Keratinocyte (primary cell): ENCODE measurements at regions of chr9 and their contacts with region 1.

Region 1: DNA sequence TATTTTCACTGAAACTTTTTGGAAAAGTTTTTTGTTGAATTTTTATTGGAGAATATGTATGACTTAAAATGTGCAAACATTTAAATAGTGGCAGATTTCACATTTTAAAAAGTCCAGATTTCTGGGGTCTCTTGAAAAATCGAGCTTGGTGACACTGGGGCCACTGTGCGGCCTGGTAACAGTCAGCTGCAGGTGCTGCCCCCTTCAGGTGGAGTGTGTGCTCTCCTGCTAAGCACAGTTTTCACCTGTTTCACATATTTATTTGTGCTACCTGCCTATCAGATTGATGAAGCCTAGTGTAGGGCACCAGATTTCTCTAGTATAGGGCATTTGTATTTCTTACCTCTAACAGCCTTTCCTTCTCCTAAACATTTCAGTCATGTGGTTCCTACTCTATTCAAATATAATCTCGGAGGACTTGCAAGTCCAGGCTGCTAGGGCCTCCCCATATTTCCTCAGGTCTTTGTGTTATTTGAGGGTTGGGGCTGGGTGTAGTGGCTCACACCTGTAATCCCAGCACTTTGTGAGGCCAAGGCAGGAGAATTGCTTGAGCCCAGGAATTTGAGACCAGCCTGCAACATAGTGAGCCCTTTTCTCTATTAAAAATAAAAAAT is 95.8 kb upstream of the KLF9 start:
- DNase-seq: no peak
- H3K4me3 ChIP-seq: no peak overlapping the region
- H3K27ac ChIP-seq: no peak overlapping the region
- H3K4me1 ChIP-seq: no peaks in the 10 kb centered on the region
- H3K27me3 ChIP-seq: no peaks in the 10 kb centered on the region
- CTCF ChIP-seq: peak; percentile 66 to 88 (median 68)

Region 2: DNA sequence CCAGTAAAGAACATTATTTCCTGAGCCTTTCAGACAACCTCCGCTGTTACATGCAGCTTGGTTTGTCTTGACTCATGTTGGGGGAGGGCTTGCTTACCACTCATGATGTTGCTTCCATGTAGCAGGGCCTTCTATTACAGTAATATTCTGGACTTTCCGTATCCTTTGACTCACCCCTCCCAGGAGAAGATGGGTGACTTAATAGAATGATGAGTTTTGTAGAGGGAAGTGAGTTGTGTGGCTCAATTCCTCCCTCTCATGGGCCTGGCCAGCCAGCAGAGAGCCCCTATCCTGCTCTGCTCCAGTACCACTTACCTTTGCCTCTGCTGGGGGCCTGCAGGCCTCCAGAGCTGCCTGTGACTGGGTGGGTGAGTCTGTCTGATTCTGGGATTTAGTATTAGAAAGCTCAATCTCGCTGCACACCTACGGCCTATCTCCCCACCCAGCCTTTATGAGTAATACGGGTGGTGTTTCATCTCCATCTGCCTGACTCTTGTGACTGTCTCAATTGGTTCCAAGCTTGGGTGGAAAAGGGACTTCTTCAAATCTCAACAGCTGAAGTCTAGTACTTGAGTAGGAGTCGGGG is 43.2 kb before region 1 on chr9:
- dilution Hi-C with region 1: no loop called
- DNase-seq: no peak
- H3K4me3 ChIP-seq: no peak overlapping the region
- H3K27ac ChIP-seq: no peak overlapping the region
- H3K4me1 ChIP-seq: no peaks in the 10 kb centered on the region
- H3K27me3 ChIP-seq: no peaks in the 10 kb centered on the region
- CTCF ChIP-seq: no peak

Region 3: GRCh38 chr9:70602321-70603019 is 92.2 kb after region 1 on chr9:
- dilution Hi-C with region 1: loop called (anchors 25 kb)
- DNase-seq: peak; percentile 17
- H3K4me3 ChIP-seq: no peak overlapping the region
- H3K27ac ChIP-seq: no peak overlapping the region
- H3K4me1 ChIP-seq: peaks cover 3% of the 10 kb centered on the region
- H3K27me3 ChIP-seq: peaks cover 3% of the 10 kb centered on the region
- CTCF ChIP-seq: peak; percentile 66 to 82 (median 74)

Region 4: GRCh38 chr9:70935856-70936255 is 425.6 kb after region 1 on chr9:
- dilution Hi-C with region 1: no loop called
- DNase-seq: no peak
- H3K4me3 ChIP-seq: no peak overlapping the region
- H3K27ac ChIP-seq: no peak overlapping the region
- H3K4me1 ChIP-seq: no peaks in the 10 kb centered on the region
- H3K27me3 ChIP-seq: peaks cover 4% of the 10 kb centered on the region
- CTCF ChIP-seq: no peak